ENCODE measurements at regions of chr2 and their contacts with region 1.

Region 1: DNA sequence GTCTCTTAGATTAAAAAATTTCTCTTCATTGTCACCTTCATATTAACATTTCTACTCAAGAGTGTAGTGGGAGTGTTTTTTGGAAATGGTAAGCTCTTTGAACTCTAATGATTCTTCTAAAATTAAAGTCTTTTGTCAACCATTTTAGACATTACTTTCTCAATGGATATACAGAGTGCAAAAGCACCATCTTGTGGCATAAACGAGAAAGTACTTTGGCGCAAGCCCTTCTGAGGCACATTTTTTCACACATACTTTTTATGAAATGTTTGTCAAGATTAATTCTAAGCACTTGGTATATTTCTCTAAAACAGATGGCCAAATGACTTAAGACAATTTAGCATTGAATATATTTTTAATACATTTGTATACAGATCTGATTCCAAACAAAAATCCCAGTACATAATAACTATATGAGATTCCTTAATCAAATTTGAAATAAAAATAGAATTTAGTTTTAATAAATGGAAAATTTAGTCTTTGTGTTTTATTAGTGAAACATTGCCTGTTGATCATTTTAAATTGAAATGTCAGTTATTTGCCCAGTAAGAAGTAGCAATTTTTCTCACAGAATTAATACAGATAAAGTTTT is 63.3 kb upstream of the GALNT5 start:
- DNase-seq: peak; percentile 39 to 84 (median 51)
- ATAC-seq: peak; percentile 88
- H3K4me3 ChIP-seq: no peak overlapping the region
- H3K27ac ChIP-seq: no peak overlapping the region
- H3K4me1 ChIP-seq: peaks cover 0 to 10% of the 10 kb centered on the region in 2 experiments; a peak in 2 of 5 replicates
- H3K27me3 ChIP-seq: no peaks in the 10 kb centered on the region
- CTCF ChIP-seq: peak; percentile 58 to 93 (median 74)
- EP300 ChIP-seq: 0 out of 2 replicates have a peak, but pooled peaks have one; percentile 11
- POLR2A ChIP-seq: no peak
- RAD21 ChIP-seq: peak; percentile 96 to 97

Region 2: DNA sequence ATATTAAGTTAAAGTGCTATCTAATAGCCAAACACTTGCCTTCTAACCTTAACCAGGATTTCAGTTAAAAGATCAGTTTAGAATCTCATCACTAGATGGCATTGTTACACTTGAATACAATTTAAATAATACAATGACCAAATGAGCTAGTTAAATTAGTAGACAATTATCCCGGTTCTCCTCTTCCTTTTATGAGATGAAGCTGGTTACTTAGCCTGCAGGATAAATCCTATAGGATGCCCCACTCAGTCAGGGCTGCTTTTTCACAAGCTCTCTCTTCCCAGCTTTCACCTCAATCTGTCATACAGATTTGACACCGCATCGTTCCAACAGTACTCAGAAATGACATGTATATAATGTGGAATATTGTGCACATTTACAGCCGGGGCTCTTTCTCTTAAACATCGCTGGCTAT is 1816.9 kb before region 1 on chr2:
- CTCF ChIA-PET with region 1: interaction called, 3 read pairs
- POLR2A ChIA-PET with region 1: no interaction called
- in situ Hi-C with region 1: no loop called
- intact Hi-C with region 1: loop called (anchors 5 kb)
- DNase-seq: peak in 2 of 4 experiments; percentile 15 to 25
- ATAC-seq: peak; percentile 75
- H3K4me3 ChIP-seq: no peak overlapping the region
- H3K27ac ChIP-seq: no peak overlapping the region
- H3K4me1 ChIP-seq: no peaks in the 10 kb centered on the region
- H3K27me3 ChIP-seq: no peaks in the 10 kb centered on the region
- CTCF ChIP-seq: peak in 2 of 3 experiments; percentile 19 to 45; a peak in 2 of 6 replicates
- EP300 ChIP-seq: no peak
- POLR2A ChIP-seq: no peak
- RAD21 ChIP-seq: peak; percentile 58 to 76

Region 3: GRCh38 chr2:156332534-156333273 is 861.5 kb before region 1 on chr2 and contains the start of gene NR4A2:
- CTCF ChIA-PET with region 1: no interaction called
- POLR2A ChIA-PET with region 1: no interaction called
- in situ Hi-C with region 1: no loop called
- intact Hi-C with region 1: loop called (anchors 5 kb)
- DNase-seq: peak; percentile 86 to 95 (median 90)
- ATAC-seq: peak; percentile 81
- H3K4me3 ChIP-seq: peak within 1 kb of the TSS; percentile 80
- H3K27ac ChIP-seq: peak within 1 kb of the TSS; percentile 88
- H3K4me1 ChIP-seq: peaks cover 6 to 27% of the 10 kb centered on the region in 2 experiments
- H3K27me3 ChIP-seq: no peaks in the 10 kb centered on the region
- CTCF ChIP-seq: no peak; a peak in 1 of 6 replicates
- EP300 ChIP-seq: no peak
- POLR2A ChIP-seq: peak; percentile 76
- RAD21 ChIP-seq: no peak
- polyA plus RNA-seq, gene NR4A2: 1.3 to 2.1 TPM

Region 4: GRCh38 chr2:156892467-156893281 is 301.5 kb before region 1 on chr2:
- CTCF ChIA-PET with region 1: no interaction called
- POLR2A ChIA-PET with region 1: no interaction called
- in situ Hi-C with region 1: no loop called
- intact Hi-C with region 1: loop called (anchors 5 kb)
- DNase-seq: peak in 2 of 4 experiments; percentile 35 to 53
- ATAC-seq: peak; percentile 95
- H3K4me3 ChIP-seq: peak overlapping the region; percentile 16
- H3K27ac ChIP-seq: no peak overlapping the region
- H3K4me1 ChIP-seq: no peaks in the 10 kb centered on the region
- H3K27me3 ChIP-seq: no peaks in the 10 kb centered on the region
- CTCF ChIP-seq: peak; percentile 29 to 64 (median 61); a peak in 5 of 6 replicates
- EP300 ChIP-seq: no peak
- POLR2A ChIP-seq: no peak
- RAD21 ChIP-seq: peak; percentile 83 to 87

Region 5: DNA sequence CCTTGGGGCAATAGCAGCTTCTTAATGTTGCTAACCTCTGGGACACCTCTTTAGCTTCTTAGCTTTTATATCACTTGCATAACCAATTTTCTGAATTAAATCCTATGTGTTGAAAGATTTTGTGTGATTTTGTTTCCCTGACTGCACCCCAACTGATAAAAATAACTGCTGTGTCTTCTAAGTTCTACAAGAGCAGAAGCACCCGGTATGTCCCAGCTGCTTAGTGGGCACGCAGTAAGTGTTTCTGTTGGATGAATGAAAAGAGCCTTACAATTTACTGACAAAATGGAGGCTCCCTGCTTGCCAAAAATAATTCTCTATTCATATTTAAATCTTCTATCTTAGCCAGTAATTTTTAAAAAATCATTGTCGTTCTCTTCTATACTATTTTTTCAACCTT is 10.2 kb after region 1 on chr2:
- CTCF ChIA-PET with region 1: no interaction called
- POLR2A ChIA-PET with region 1: no interaction called
- in situ Hi-C with region 1: no loop called
- intact Hi-C with region 1: no loop called
- DNase-seq: no peak
- ATAC-seq: no peak
- H3K4me3 ChIP-seq: no peak overlapping the region
- H3K27ac ChIP-seq: no peak overlapping the region
- H3K4me1 ChIP-seq: no peaks in the 10 kb centered on the region
- H3K27me3 ChIP-seq: no peaks in the 10 kb centered on the region
- CTCF ChIP-seq: no peak
- EP300 ChIP-seq: no peak
- POLR2A ChIP-seq: no peak
- RAD21 ChIP-seq: no peak

Region 6: DNA sequence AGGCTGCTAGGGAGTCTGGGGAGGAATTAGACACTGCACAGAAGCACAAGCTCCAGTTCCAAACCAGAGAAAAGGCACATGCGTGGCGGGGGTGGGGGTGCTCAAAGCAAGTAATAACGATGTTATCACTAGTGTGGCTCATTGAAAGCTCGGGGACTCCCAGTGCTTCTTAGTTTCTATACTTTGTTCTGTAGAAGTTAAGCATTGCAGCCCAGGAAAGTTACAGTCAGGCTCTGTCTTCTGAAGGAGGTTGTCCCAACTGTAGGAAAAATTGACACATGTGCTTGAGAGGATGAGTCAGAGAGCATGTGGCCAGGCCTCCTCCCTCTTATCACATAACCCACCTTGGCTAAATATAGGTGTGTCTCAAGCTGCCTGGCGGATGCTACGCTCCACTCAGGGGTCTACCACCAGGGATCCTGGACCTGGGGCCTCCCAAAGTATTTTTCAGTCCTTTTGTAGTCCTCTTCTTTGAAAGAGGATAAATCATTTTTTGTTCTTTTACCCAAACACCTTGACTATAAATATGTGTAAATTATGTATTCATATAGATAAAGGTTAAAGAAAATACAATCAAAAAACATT is 67.1 kb after region 1 on chr2:
- CTCF ChIA-PET with region 1: no interaction called
- POLR2A ChIA-PET with region 1: no interaction called
- in situ Hi-C with region 1: no loop called
- intact Hi-C with region 1: loop called (anchors 2 kb)
- DNase-seq: peak; percentile 96 to 99 (median 98)
- ATAC-seq: peak; percentile 64
- H3K4me3 ChIP-seq: peak overlapping the region; percentile 53
- H3K27ac ChIP-seq: peak overlapping the region; percentile 94
- H3K4me1 ChIP-seq: peaks cover 7 to 37% of the 10 kb centered on the region in 2 experiments; a peak in 4 of 5 replicates
- H3K27me3 ChIP-seq: no peaks in the 10 kb centered on the region
- CTCF ChIP-seq: no peak
- EP300 ChIP-seq: peak; percentile 98
- POLR2A ChIP-seq: peak; percentile 90
- RAD21 ChIP-seq: peak; percentile 16 to 41; a peak in 3 of 4 replicates

Region 7: GRCh38 chr2:157291009-157291408 is 96.8 kb after region 1 on chr2:
- CTCF ChIA-PET with region 1: no interaction called
- POLR2A ChIA-PET with region 1: no interaction called
- in situ Hi-C with region 1: no loop called
- intact Hi-C with region 1: no loop called
- DNase-seq: no peak
- ATAC-seq: no peak
- H3K4me3 ChIP-seq: no peak overlapping the region
- H3K27ac ChIP-seq: no peak overlapping the region
- H3K4me1 ChIP-seq: peaks cover 0 to 3% of the 10 kb centered on the region in 2 experiments; a peak in 2 of 5 replicates
- H3K27me3 ChIP-seq: no peaks in the 10 kb centered on the region
- CTCF ChIP-seq: no peak
- EP300 ChIP-seq: no peak
- POLR2A ChIP-seq: no peak
- RAD21 ChIP-seq: no peak

Measured in K562 (cell line).